Cardiac septum (tissue), 1 donor: ENCODE measurements at regions of chr9 and their contacts with region 1.

Region 1: DNA sequence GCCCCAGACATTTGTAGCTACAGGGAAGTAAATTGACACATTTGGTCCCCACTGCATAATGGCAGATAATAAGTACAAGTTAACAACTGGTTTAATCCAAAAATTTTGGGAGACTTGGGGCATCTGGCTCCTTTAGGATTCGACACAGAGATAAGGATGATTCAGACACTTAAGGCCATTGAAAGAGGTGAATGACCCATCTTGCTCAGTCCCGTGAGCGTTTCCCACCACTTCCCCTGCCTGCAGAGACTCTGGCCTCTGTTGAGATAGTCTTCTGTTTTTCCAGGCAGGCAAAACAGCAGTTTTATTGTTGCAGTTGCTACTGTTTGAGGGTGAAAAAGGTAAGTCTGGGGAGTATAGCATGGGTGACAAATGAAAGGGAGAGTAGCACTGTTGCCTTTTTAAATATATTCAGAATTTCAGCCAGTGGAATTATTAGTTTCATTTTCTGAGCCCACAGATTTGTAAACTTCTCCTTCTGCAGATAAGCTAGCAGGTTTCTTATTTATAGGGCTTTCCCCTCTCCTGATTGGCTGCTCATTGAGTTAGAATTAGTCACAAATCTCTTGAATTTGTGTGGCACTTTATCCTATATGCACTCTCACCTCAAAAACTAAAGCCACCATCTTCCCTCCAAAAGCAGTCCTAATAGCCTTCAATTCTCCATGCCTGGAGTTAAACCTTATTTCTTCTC is 19.3 kb downstream of the ACO1 start:
- DNase-seq: no peak

Region 2: GRCh38 chr9:32072570-32072969 is 331.1 kb before region 1 on chr9:
- intact Hi-C with region 1: no loop called
- DNase-seq: no peak

Region 3: DNA sequence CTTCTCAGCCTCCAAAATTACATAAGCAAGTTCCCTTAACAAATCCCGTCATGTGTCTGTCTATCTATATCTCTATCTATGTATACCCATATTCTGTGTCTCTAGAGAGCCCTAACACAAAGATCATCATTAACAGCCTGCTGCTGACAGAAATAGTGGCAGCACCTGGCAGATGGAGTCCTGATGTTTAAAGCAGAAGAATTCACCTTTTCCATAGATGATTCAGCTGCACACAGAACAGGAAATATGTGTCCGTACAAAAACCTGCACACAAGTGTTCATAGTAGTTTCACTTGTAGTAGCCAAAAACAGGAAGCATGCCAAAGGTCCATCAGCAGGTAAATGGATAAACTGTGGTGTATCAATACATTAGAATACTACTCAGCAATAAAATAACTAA is 64.3 kb before region 1 on chr9:
- intact Hi-C with region 1: no loop called
- DNase-seq: no peak

Region 4: GRCh38 chr9:32456564-32456963 is 52.9 kb after region 1 on chr9:
- intact Hi-C with region 1: no loop called
- DNase-seq: no peak

Region 5: GRCh38 chr9:32490601-32491000 is 86.9 kb after region 1 on chr9:
- intact Hi-C with region 1: loop called (anchors 10 kb)
- DNase-seq: no peak